Activated naive CD4-positive, alpha-beta T cell treated with anti-CD3 and anti-CD28 coated beads for 36 hours (primary cell): ENCODE measurements at regions of chrX and their contacts with region 1.

Region 1: GRCh38 chrX:30652527-30653414 is 452 bp upstream of the GK start:
- DNase-seq: peak; percentile 93
- H3K4me3 Mint-ChIP-seq: peak overlapping the region; percentile 90
- H3K27ac Mint-ChIP-seq: peak overlapping the region; percentile 93
- H3K4me1 Mint-ChIP-seq: peaks cover 31% of the 10 kb centered on the region
- H3K27me3 Mint-ChIP-seq: no peaks in the 10 kb centered on the region

Region 2: GRCh38 chrX:30615229-30615628 is 37.5 kb before region 1 on chrX:
- CTCF ChIA-PET with region 1: no interaction called
- intact Hi-C with region 1: loop called (anchors 1 kb)
- DNase-seq: no peak
- H3K4me3 Mint-ChIP-seq: no peak overlapping the region
- H3K27ac Mint-ChIP-seq: no peak overlapping the region
- H3K4me1 Mint-ChIP-seq: peaks cover 3% of the 10 kb centered on the region
- H3K27me3 Mint-ChIP-seq: no peaks in the 10 kb centered on the region